Activated naive CD4-positive, alpha-beta T cell treated with anti-CD3 and anti-CD28 coated beads for 36 hours (primary cell): ENCODE measurements at regions of chr17 and their contacts with region 1.

Region 1: DNA sequence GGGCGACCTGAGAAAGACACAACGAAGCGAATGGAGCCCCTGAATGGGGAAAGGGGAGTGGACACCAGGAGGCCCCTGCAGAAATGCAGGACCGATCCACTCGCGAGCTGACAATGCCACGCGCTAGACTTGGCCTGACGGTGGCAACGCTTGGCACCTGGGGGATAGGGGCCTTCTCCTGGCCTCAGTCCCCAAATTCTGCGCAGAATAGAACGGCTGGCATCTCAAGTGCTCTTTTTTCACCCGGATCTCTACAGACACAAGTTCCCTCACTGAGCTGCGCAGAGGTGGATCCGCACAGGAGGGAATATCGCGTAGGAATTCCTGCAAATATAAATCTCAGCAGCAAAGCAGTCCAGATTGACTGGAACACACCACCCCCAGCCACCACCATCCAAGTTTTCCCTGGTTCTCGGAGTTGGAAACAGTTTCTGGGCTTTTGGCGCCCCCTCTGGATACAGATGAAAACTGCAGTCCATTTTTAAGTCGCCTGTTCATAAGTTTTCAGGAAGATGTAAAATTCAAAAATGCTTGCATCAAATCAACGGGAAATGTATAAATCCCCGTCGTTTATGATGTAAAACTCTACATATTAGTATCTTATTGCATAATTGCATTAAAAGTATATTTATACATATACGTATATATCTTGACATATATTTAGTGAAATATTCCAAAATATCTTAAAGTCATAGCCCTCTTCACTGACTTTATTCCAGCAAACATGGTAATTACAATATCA is 2.3 kb upstream of the SOX9 start:
- DNase-seq: peak; percentile 56
- H3K4me3 Mint-ChIP-seq: no peak overlapping the region
- H3K27ac Mint-ChIP-seq: no peak overlapping the region
- H3K4me1 Mint-ChIP-seq: peaks cover 30% of the 10 kb centered on the region
- H3K27me3 Mint-ChIP-seq: peaks cover 81% of the 10 kb centered on the region

Region 2: DNA sequence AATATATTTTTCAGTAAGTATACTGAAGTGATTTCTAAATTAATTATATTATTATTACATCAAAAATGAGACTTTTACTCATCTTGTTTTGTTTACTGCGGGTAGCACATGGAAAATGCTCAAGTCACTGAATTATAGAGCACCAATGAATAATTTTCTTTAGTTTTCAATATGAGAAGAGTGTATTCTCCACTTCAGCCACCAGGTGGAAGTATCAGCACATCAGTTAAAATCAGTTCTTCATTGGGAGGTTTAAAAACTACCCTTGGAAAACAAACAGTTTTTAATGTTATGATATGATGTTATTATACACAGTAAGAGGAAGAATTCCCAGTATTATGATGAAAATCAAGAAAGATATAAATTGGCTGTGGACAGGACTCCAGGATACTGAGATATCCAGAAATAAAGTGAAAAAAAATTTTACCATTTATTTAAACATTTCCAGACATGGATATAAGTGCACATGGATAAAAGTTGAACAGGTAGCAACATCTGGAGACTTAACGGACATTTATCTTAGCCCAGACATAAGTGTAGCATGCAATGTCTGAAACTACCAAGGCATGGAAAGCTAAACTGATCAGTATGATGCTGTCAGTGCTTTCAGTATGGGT is 1481.9 kb before region 1 on chr17:
- CTCF ChIA-PET with region 1: no interaction called
- intact Hi-C with region 1: loop called (anchors 1 kb)
- DNase-seq: no peak
- H3K4me3 Mint-ChIP-seq: no peak overlapping the region
- H3K27ac Mint-ChIP-seq: no peak overlapping the region
- H3K4me1 Mint-ChIP-seq: no peaks in the 10 kb centered on the region
- H3K27me3 Mint-ChIP-seq: peaks cover 2% of the 10 kb centered on the region

Region 3: GRCh38 chr17:70767102-70767701 is 1351.3 kb before region 1 on chr17:
- CTCF ChIA-PET with region 1: no interaction called
- intact Hi-C with region 1: loop called (anchors 5 kb)
- DNase-seq: no peak
- H3K4me3 Mint-ChIP-seq: no peak overlapping the region
- H3K27ac Mint-ChIP-seq: no peak overlapping the region
- H3K4me1 Mint-ChIP-seq: no peaks in the 10 kb centered on the region
- H3K27me3 Mint-ChIP-seq: peaks cover under 1% of the 10 kb centered on the region

Region 4: GRCh38 chr17:71084219-71084618 is 1034.3 kb before region 1 on chr17:
- CTCF ChIA-PET with region 1: no interaction called
- intact Hi-C with region 1: loop called (anchors 10 kb)
- DNase-seq: peak; percentile 4
- H3K4me3 Mint-ChIP-seq: no peak overlapping the region
- H3K27ac Mint-ChIP-seq: no peak overlapping the region
- H3K4me1 Mint-ChIP-seq: no peaks in the 10 kb centered on the region
- H3K27me3 Mint-ChIP-seq: no peaks in the 10 kb centered on the region

Region 5: GRCh38 chr17:71472809-71473789 is 645.4 kb before region 1 on chr17:
- CTCF ChIA-PET with region 1: no interaction called
- intact Hi-C with region 1: loop called (anchors 1 kb)
- DNase-seq: peak; percentile 4
- H3K4me3 Mint-ChIP-seq: no peak overlapping the region
- H3K27ac Mint-ChIP-seq: no peak overlapping the region
- H3K4me1 Mint-ChIP-seq: no peaks in the 10 kb centered on the region
- H3K27me3 Mint-ChIP-seq: no peaks in the 10 kb centered on the region

Region 6: GRCh38 chr17:72077326-72077960 is 41.1 kb before region 1 on chr17:
- CTCF ChIA-PET with region 1: no interaction called
- intact Hi-C with region 1: no loop called
- DNase-seq: no peak
- H3K4me3 Mint-ChIP-seq: no peak overlapping the region
- H3K27ac Mint-ChIP-seq: no peak overlapping the region
- H3K4me1 Mint-ChIP-seq: no peaks in the 10 kb centered on the region
- H3K27me3 Mint-ChIP-seq: peaks cover 4% of the 10 kb centered on the region

Region 7: GRCh38 chr17:72539981-72540897 is 421.7 kb after region 1 on chr17:
- CTCF ChIA-PET with region 1: no interaction called
- intact Hi-C with region 1: loop called (anchors 2 kb)
- DNase-seq: peak; percentile 57
- H3K4me3 Mint-ChIP-seq: no peak overlapping the region
- H3K27ac Mint-ChIP-seq: peak overlapping the region; percentile 31
- H3K4me1 Mint-ChIP-seq: peaks cover 3% of the 10 kb centered on the region
- H3K27me3 Mint-ChIP-seq: peaks cover 35% of the 10 kb centered on the region